Keratinocyte (primary cell): ENCODE measurements at regions of chr3 and their contacts with region 1.

Region 1: GRCh38 chr3:9302425-9303181 is 53.2 kb upstream of the SRGAP3 start:
- DNase-seq: peak; percentile 94
- H3K4me3 ChIP-seq: peak overlapping the region; percentile 34 to 75 (median 51)
- H3K27ac ChIP-seq: peak overlapping the region; percentile 92
- H3K4me1 ChIP-seq: peaks cover 21% of the 10 kb centered on the region
- H3K27me3 ChIP-seq: no peaks in the 10 kb centered on the region
- CTCF ChIP-seq: peak; percentile 77 to 93 (median 88)

Region 2: GRCh38 chr3:8987645-8988383 is 314.8 kb before region 1 on chr3:
- dilution Hi-C with region 1: loop called (anchors 25 kb)
- DNase-seq: no peak
- H3K4me3 ChIP-seq: no peak overlapping the region
- H3K27ac ChIP-seq: no peak overlapping the region
- H3K4me1 ChIP-seq: no peaks in the 10 kb centered on the region
- H3K27me3 ChIP-seq: no peaks in the 10 kb centered on the region
- CTCF ChIP-seq: peak; percentile 82 to 89 (median 84)

Region 3: DNA sequence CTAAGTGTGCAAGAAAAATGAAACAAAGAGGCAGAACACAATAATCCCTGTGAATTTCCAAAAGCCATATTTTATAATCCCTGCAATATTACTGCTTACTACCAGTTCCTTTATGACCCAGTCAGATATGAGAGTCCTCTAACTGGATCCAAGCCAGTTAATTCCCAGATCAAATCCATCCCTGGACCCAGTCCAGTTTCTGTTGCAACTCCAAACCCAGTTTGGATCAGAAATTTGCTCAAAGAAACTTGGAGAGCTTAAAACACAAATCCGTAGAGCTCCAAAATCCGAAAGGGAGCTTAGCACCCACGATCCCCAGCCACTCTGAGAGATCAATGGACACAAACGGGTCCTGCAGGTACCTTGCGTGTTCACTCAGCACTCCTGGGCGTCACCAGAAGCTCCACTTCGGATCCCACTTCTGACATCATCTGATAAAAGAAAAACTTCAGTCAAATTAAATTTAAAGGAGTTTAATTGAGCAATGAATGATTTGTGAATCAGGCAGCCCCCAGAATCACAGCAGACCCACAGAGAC is 27.6 kb after region 1 on chr3:
- dilution Hi-C with region 1: no loop called
- DNase-seq: no peak
- H3K4me3 ChIP-seq: no peak overlapping the region
- H3K27ac ChIP-seq: no peak overlapping the region
- H3K4me1 ChIP-seq: no peaks in the 10 kb centered on the region
- H3K27me3 ChIP-seq: no peaks in the 10 kb centered on the region
- CTCF ChIP-seq: no peak